ENCODE measurements at regions of chr7 and their contacts with region 1.

Region 1: GRCh38 chr7:116316833-116317612 is 106.7 kb downstream of the TES start:
- DNase-seq: no peak
- H3K4me3 Mint-ChIP-seq: no peak overlapping the region
- H3K27ac Mint-ChIP-seq: peak overlapping the region; percentile 52
- H3K4me1 Mint-ChIP-seq: peaks cover 7% of the 10 kb centered on the region
- H3K27me3 Mint-ChIP-seq: peaks cover 2% of the 10 kb centered on the region

Region 2: GRCh38 chr7:116340943-116341907 is 24.2 kb after region 1 on chr7:
- intact Hi-C with region 1: loop called (anchors 2 kb)
- DNase-seq: no peak
- H3K4me3 Mint-ChIP-seq: no peak overlapping the region
- H3K27ac Mint-ChIP-seq: no peak overlapping the region
- H3K4me1 Mint-ChIP-seq: no peaks in the 10 kb centered on the region
- H3K27me3 Mint-ChIP-seq: peaks cover 19% of the 10 kb centered on the region

Measured in activated T-helper 1 cell treated with anti-CD3 and anti-CD28 coated beads, Interleukin-12 subunit alpha, Interleukin-12 subunit beta, Interleukin-2, Interleukin-4 antibody, amounts not matched to agents 30 ng/mL and 10 ng/mL and 1 ng/mL, durations not matched to agents 14 hours and 24 hours and 36 hours (primary cell).